Prostate gland (tissue), 2 donors: ENCODE measurements at regions of chr5 and their contacts with region 1.

Region 1: DNA sequence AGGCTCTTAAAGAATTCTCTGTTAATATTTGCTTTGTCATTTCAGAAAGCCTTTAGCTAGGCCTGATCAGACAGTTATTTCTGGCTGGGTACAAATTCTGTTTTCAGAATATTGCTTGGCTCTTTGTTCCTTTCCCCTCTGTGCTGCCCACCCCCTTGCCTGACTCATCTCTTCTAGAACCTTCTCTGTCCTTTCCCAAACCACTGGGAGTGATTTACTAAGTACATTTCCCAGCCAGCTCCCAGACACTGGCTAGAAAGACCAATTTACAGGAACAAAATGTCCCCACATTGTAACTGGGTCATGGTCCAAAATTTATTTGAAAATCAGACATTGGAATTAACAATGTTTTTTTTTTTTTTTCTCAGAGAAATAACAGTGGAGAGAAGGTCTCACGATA is 133.1 kb upstream of the MAP1B start:
- DNase-seq: peak; percentile 8
- H3K4me3 ChIP-seq: no peak overlapping the region
- H3K27ac ChIP-seq: peak overlapping the region; percentile 45 to 54
- H3K4me1 ChIP-seq: peaks cover 4% of the 10 kb centered on the region
- H3K27me3 ChIP-seq: no peaks in the 10 kb centered on the region
- CTCF ChIP-seq: no peak
- POLR2A ChIP-seq: no peak

Region 2: GRCh38 chr5:72280581-72281170 is 306.5 kb after region 1 on chr5:
- intact Hi-C with region 1: loop called (anchors 10 kb)
- DNase-seq: no peak
- H3K4me3 ChIP-seq: no peak overlapping the region
- H3K27ac ChIP-seq: peak overlapping the region; percentile 58 to 65
- H3K4me1 ChIP-seq: no peaks in the 10 kb centered on the region
- H3K27me3 ChIP-seq: no peaks in the 10 kb centered on the region
- CTCF ChIP-seq: peak in 3 of 4 experiments; percentile 9 to 41 (median 37)
- POLR2A ChIP-seq: no peak